A673 (cell line): ENCODE measurements at regions of chr3 and their contacts with region 1.

Region 1: GRCh38 chr3:149717391-149718056 is 34.8 kb downstream of the COMMD2 start:
- DNase-seq: peak; percentile 84
- H3K4me3 ChIP-seq: no peak overlapping the region
- H3K27ac ChIP-seq: no peak overlapping the region
- H3K4me1 ChIP-seq: peaks cover 6% of the 10 kb centered on the region
- H3K27me3 ChIP-seq: no peaks in the 10 kb centered on the region
- CTCF ChIP-seq: peak; percentile 85

Region 2: DNA sequence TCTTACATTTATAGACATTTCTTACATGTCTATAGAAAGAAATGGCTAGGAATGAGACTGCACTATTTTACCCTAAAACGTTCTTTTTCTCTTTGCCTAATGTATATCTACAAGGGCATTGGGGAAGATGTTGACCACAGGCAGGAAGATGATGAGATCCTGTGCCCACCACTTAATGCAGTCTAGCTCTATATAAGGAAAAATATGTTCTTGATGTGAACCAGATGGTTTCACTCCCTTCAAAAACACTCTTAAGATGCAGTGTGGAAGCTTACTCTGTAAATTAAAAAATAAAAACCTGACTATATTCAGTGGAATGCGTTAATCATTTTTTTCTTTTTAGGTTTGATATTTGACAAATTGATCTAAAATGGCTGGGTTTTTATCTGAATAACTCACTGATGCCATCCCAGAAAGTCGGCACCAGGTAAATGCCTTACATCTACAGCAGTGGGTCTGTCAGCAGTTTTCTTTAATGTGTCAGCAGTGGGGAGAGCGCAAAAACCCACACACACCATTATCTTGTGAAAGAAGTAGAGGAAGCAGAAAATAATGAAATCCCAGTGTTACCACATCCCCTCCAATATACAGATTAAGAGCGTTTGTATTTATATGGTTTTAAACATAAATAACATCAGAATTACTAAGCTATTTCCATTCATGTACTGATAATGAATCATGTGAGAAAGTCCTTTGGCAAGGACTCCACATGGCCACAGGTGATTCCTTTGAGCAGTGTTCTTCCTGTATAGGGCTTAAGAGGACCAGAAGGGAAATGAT is 1009.7 kb before region 1 on chr3:
- CTCF ChIA-PET with region 1: no interaction called
- POLR2A ChIA-PET with region 1: no interaction called
- intact Hi-C with region 1: no loop called
- DNase-seq: no peak
- H3K4me3 ChIP-seq: no peak overlapping the region
- H3K27ac ChIP-seq: no peak overlapping the region
- H3K4me1 ChIP-seq: no peaks in the 10 kb centered on the region
- H3K27me3 ChIP-seq: peaks cover 12% of the 10 kb centered on the region
- CTCF ChIP-seq: no peak

Region 3: GRCh38 chr3:149527531-149528339 is 189.8 kb before region 1 on chr3:
- CTCF ChIA-PET with region 1: interaction called, 9 read pairs
- POLR2A ChIA-PET with region 1: no interaction called
- intact Hi-C with region 1: loop called (anchors 1 kb)
- DNase-seq: peak; percentile 33
- H3K4me3 ChIP-seq: no peak overlapping the region
- H3K27ac ChIP-seq: peak overlapping the region; percentile 18
- H3K4me1 ChIP-seq: peaks cover 19% of the 10 kb centered on the region
- H3K27me3 ChIP-seq: no peaks in the 10 kb centered on the region
- CTCF ChIP-seq: peak; percentile 49

Region 4: DNA sequence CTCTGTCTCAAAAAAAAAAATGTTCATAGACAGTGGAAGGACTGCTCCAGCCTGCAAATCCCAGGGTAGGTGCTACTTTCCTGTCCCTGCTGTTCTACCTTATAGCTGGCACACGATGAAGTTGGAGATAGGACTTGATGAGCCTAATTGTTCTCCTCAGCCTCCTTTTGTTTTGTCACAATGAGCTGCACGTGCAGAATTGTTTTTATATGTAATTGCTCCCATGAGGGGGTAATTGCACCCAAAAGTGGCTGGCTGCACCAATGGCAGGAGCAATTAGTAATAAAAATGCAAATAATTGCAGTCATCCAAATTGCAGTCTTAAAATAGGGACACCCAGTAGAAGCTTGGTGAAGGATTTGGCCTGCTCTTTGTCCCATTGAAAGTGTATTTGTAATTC is 316.2 kb after region 1 on chr3:
- CTCF ChIA-PET with region 1: no interaction called
- POLR2A ChIA-PET with region 1: no interaction called
- intact Hi-C with region 1: no loop called
- DNase-seq: no peak
- H3K4me3 ChIP-seq: no peak overlapping the region
- H3K27ac ChIP-seq: no peak overlapping the region
- H3K4me1 ChIP-seq: no peaks in the 10 kb centered on the region
- H3K27me3 ChIP-seq: no peaks in the 10 kb centered on the region
- CTCF ChIP-seq: no peak